Endothelial cell of umbilical vein (primary cell): ENCODE measurements at regions of chr10 and their contacts with region 1.

Region 1: DNA sequence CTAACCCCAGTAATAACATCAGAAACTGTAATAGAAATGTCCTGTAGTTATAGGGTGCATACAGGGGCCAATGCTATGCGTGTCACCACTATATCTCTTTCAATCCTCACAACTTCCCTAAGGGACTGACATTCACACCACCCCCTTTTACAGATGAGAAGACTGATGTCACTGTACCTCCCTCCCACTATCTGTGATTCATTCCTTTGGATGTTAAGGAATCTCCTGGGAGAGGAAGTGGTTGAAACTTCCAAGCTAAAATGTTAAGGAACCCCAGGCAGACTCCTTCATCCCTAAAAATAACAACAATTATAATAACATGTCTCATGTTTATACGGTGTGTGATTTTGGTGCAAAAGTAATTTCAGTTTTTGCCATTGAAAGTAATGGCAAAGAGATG is 5.4 kb downstream of the COL13A1 start:
- DNase-seq: peak; percentile 30
- H3K4me3 ChIP-seq: no peak overlapping the region
- H3K27ac ChIP-seq: peak overlapping the region; percentile 72
- H3K4me1 ChIP-seq: peaks cover 43% of the 10 kb centered on the region
- H3K27me3 ChIP-seq: no peaks in the 10 kb centered on the region
- CTCF ChIP-seq: no peak
- POLR2A ChIP-seq: no peak

Region 2: GRCh38 chr10:69757553-69758309 is 49.4 kb before region 1 on chr10:
- CTCF ChIA-PET with region 1: no interaction called
- POLR2A ChIA-PET with region 1: no interaction called
- dilution Hi-C with region 1: no loop called
- intact Hi-C with region 1: no loop called
- DNase-seq: peak; percentile 35
- H3K4me3 ChIP-seq: no peak overlapping the region
- H3K27ac ChIP-seq: no peak overlapping the region
- H3K4me1 ChIP-seq: no peaks in the 10 kb centered on the region
- H3K27me3 ChIP-seq: peaks cover 15 to 26% of the 10 kb centered on the region in 2 experiments
- CTCF ChIP-seq: no peak
- POLR2A ChIP-seq: no peak

Region 3: GRCh38 chr10:69819716-69820506 is 12.8 kb after region 1 on chr10:
- CTCF ChIA-PET with region 1: interaction called, 21 read pairs
- POLR2A ChIA-PET with region 1: interaction called, 3 read pairs
- dilution Hi-C with region 1: no loop called
- intact Hi-C with region 1: loop called (anchors 1 kb)
- DNase-seq: peak; percentile 71
- H3K4me3 ChIP-seq: no peak overlapping the region
- H3K27ac ChIP-seq: peak overlapping the region; percentile 87
- H3K4me1 ChIP-seq: peaks cover 37% of the 10 kb centered on the region
- H3K27me3 ChIP-seq: no peaks in the 10 kb centered on the region
- CTCF ChIP-seq: no peak
- POLR2A ChIP-seq: no peak